Activated CD8-positive, alpha-beta T cell treated with anti-CD3 and anti-CD28 coated beads for 36 hours (primary cell): ENCODE measurements at regions of chr18 and their contacts with region 1.

Region 1: DNA sequence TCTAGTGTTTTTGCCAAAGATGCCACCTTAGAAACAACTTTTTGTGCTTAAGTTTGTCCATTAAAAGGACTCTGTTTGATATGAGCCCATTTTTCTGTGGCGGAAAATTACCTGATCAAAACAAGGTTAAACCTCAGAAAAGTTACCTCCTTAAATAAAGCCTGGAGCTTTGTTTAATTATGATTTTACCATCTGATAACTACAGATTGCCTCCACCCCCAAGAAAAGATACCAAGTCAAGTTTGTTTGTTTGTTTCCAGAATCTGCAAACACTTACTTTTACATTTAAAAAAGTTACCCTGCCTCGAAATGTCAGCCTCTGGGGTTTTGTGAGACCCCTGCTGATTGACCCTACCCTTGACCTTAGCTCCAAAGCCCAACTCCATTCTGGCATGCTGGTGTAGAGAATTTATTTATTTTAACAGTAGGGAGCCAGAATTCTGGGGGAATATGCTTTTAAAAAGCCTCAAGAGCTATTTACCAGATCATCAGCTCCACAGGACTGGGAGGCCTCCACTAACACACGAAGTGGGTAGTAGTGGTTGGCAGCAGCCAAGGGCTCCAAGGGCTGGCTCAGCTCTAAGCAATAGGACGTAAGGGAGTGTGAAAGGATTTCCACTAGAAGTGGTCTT is 23.3 kb upstream of the GREB1L start:
- DNase-seq: no peak
- ATAC-seq: no peak
- H3K4me3 Mint-ChIP-seq: no peak overlapping the region
- H3K27ac Mint-ChIP-seq: no peak overlapping the region
- H3K4me1 Mint-ChIP-seq: no peaks in the 10 kb centered on the region
- H3K27me3 Mint-ChIP-seq: no peaks in the 10 kb centered on the region
- CTCF ChIP-seq: no peak

Region 2: GRCh38 chr18:21155443-21155842 is 63.3 kb before region 1 on chr18:
- CTCF ChIA-PET with region 1: no interaction called
- POLR2A ChIA-PET with region 1: no interaction called
- intact Hi-C with region 1: loop called (anchors 10 kb)
- DNase-seq: no peak
- ATAC-seq: no peak
- H3K4me3 Mint-ChIP-seq: no peak overlapping the region
- H3K27ac Mint-ChIP-seq: no peak overlapping the region
- H3K4me1 Mint-ChIP-seq: no peaks in the 10 kb centered on the region
- H3K27me3 Mint-ChIP-seq: peaks cover 7% of the 10 kb centered on the region
- CTCF ChIP-seq: no peak